Activated naive CD4-positive, alpha-beta T cell treated with anti-CD3 and anti-CD28 coated beads for 36 hours (primary cell): ENCODE measurements at regions of chr13 and their contacts with region 1.

Region 1: DNA sequence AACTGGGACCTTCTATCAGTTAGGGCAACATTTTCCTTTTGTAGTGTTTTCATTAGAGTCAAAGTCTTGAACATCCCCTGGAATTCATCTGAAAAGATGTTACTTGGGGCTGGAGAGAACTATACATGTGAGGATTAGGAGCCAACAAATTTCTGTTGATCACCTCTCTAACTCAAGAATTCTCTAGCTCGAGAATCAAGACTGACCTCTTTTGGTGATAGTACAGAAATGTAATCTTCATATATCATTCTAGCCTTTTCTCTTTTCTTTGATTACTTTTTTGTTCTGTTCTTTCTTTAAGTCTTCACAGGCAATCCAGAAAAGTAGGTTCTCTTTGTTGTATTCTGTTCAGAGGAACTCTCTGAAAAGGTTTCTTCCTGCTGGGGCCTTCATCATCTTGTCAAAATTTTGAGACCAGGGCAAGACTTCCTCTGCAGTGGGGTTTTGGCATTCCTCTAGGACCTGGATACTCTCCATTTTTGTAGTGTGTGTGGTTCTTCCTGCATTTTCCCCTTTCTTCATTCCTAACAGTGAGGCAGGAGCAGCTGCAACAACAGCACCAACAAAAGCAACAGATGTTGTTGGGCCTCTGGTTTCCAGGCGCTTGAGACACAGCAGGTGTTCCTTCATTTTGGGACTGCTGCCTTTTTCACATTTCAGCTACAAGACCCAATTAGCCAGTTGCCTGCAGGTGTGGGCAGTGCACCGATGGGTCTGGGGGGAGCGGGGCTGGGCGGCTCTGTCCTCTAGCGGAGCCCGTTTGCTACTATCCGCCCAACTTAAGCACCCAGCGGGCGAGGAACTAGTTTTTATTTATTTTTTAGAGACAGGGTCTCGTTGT is 26.2 kb downstream of the ELF1 start:
- DNase-seq: no peak
- H3K4me3 Mint-ChIP-seq: no peak overlapping the region
- H3K27ac Mint-ChIP-seq: peak overlapping the region; percentile 69
- H3K4me1 Mint-ChIP-seq: peaks cover 90% of the 10 kb centered on the region
- H3K27me3 Mint-ChIP-seq: no peaks in the 10 kb centered on the region

Region 2: GRCh38 chr13:40982772-40983171 is 10.1 kb before region 1 on chr13:
- CTCF ChIA-PET with region 1: interaction called, 5 read pairs
- intact Hi-C with region 1: loop called (anchors 1 kb)
- DNase-seq: peak; percentile 60
- H3K4me3 Mint-ChIP-seq: peak overlapping the region; percentile 90
- H3K27ac Mint-ChIP-seq: peak overlapping the region; percentile 100
- H3K4me1 Mint-ChIP-seq: peaks cover 55% of the 10 kb centered on the region
- H3K27me3 Mint-ChIP-seq: no peaks in the 10 kb centered on the region

Region 3: DNA sequence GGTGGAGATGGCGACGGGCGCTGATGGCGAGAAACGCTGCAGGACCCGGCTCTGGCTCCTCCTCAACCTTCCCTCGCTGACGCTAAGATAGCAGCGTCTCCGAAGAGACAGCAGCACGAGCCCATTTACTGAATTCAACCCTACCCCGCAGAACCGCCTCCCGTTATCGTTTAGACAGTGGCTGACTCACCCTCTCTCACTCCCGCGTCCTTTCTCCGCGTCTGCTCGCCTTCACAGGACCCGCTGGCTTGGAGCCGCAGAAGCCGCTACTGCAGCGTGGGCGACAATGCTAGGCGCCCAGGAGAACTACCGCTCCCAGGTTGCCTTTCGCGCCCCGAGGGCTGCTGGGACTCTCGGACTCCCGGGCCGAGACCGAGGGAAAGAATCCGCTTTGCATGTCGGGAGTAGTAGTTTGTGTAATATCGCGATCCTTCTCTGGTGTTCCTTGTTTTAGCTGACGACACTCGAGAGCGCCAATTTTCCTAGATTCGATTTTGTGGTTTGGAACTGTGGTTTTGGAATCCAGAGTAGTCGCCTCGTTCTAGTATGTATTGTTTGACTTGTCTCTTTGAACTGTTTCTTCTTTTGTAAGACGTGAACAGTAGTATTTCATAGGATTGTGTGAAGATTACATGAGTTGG is 139.7 kb after region 1 on chr13 and contains the start of gene KBTBD6:
- CTCF ChIA-PET with region 1: no interaction called
- intact Hi-C with region 1: no loop called
- DNase-seq: peak; percentile 98
- H3K4me3 Mint-ChIP-seq: peak within 1 kb of the TSS; percentile 92
- H3K27ac Mint-ChIP-seq: peak within 1 kb of the TSS; percentile 87
- H3K4me1 Mint-ChIP-seq: peaks cover 35% of the 10 kb centered on the region
- H3K27me3 Mint-ChIP-seq: no peaks in the 10 kb centered on the region
- total RNA-seq, gene KBTBD6: 3.9 to 4.0 TPM

Region 4: GRCh38 chr13:41802684-41803444 is 810.0 kb after region 1 on chr13:
- CTCF ChIA-PET with region 1: no interaction called
- intact Hi-C with region 1: no loop called
- DNase-seq: peak; percentile 18
- H3K4me3 Mint-ChIP-seq: no peak overlapping the region
- H3K27ac Mint-ChIP-seq: peak overlapping the region; percentile 68
- H3K4me1 Mint-ChIP-seq: peaks cover 14% of the 10 kb centered on the region
- H3K27me3 Mint-ChIP-seq: no peaks in the 10 kb centered on the region

Region 5: DNA sequence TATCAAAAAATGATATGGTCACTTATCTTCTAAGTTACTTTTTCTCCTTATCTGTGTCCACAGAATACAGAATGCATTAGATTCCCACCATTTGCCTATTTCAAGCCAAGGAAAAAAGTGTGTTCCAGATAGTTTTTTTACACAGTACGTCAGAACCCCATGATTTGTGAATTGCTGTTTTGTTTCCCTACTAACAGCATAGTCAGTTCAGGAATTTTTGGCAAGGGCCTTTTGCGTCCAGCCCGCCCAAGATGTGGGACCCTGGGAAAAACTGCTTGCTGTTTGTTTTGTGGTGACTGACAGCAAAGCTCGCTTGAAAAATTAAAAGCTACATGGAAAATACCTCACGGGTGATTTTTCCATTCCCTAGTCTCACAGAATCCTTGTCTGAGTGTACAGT is 1768.1 kb after region 1 on chr13:
- CTCF ChIA-PET with region 1: no interaction called
- intact Hi-C with region 1: no loop called
- DNase-seq: no peak
- H3K4me3 Mint-ChIP-seq: no peak overlapping the region
- H3K27ac Mint-ChIP-seq: no peak overlapping the region
- H3K4me1 Mint-ChIP-seq: peaks cover 2% of the 10 kb centered on the region
- H3K27me3 Mint-ChIP-seq: peaks cover 12% of the 10 kb centered on the region